Activated B cell treated with CpG ODN at 0.5 μM for 24 hours (primary cell): ENCODE measurements at regions of chr1 and their contacts with region 1.

Region 1: GRCh38 chr1:160098852-160099561 is 588 bp upstream of the IGSF8 start:
- DNase-seq: peak; percentile 98
- ATAC-seq: peak; percentile 90
- H3K4me3 Mint-ChIP-seq: peak overlapping the region; percentile 84
- H3K27ac Mint-ChIP-seq: peak overlapping the region; percentile 85
- H3K4me1 Mint-ChIP-seq: peaks cover 39% of the 10 kb centered on the region
- H3K27me3 Mint-ChIP-seq: no peaks in the 10 kb centered on the region
- CTCF ChIP-seq: no peak

Region 2: DNA sequence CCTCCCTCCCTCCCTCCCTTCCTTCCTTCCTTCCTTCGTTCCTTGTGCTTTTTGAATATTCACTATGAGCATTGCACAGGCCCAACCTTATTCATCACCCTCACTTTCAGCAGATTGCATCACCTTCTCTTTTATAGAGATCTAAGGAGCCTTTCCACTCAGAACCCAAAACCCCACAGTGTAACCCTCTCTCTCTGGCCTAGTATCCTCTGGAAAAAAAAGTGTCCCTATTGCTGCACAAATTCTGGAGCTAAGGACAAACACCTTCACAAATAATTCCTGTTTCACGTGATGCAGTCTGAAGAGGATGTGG is 588.8 kb before region 1 on chr1:
- CTCF ChIA-PET with region 1: no interaction called
- POLR2A ChIA-PET with region 1: no interaction called
- intact Hi-C with region 1: no loop called
- DNase-seq: no peak
- ATAC-seq: no peak
- H3K4me3 Mint-ChIP-seq: no peak overlapping the region
- H3K27ac Mint-ChIP-seq: no peak overlapping the region
- H3K4me1 Mint-ChIP-seq: no peaks in the 10 kb centered on the region
- H3K27me3 Mint-ChIP-seq: peaks cover 5% of the 10 kb centered on the region
- CTCF ChIP-seq: no peak

Region 3: GRCh38 chr1:159924981-159925712 is 173.9 kb before region 1 on chr1 and contains the start of gene TAGLN2:
- CTCF ChIA-PET with region 1: no interaction called
- POLR2A ChIA-PET with region 1: interaction called, 5 read pairs
- intact Hi-C with region 1: loop called (anchors 5 kb)
- DNase-seq: peak; percentile 94
- ATAC-seq: peak; percentile 69
- H3K4me3 Mint-ChIP-seq: peak within 1 kb of the TSS; percentile 99
- H3K27ac Mint-ChIP-seq: peak within 1 kb of the TSS; percentile 99
- H3K4me1 Mint-ChIP-seq: peaks cover 56% of the 10 kb centered on the region
- H3K27me3 Mint-ChIP-seq: no peaks in the 10 kb centered on the region
- CTCF ChIP-seq: no peak
- total RNA-seq, gene TAGLN2: 327 and 364 TPM in 2 replicates

Region 4: DNA sequence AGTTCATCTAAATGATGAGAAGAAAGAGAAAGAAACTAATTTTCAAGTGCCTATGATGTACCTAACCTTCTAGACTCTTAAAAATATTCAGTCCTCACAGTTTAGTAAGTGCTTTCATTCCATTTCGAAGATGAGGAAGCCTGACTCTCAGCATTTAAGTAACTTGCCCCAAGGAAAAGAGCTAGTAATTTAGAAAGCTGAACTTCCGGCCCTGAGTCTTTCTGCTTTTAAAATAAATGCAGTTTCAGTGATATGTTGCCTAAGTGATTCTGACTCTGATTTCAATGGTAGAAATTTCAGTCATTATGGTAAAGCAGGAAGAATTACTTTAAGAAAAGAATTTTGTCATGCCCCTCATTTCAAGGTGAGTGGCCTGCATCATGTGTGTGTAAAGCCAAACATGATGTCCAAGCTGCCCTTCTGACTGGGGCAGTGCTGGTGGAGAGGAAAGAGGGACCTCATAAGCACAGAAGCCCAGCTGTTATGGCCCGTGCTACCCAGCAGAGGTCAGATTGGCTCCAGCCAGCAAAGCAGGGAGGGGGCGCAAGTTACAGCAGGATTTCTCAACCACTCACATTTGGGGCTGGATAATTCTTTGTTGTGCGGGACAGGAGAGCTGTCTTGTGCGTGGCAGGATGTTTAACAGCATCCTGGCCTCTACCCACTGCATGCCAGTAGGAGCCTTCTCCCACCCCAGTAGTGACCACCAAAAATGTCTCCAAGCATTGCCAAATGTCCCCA is 63.1 kb after region 1 on chr1:
- CTCF ChIA-PET with region 1: no interaction called
- POLR2A ChIA-PET with region 1: no interaction called
- intact Hi-C with region 1: no loop called
- DNase-seq: no peak
- ATAC-seq: peak; percentile 25
- H3K4me3 Mint-ChIP-seq: no peak overlapping the region
- H3K27ac Mint-ChIP-seq: no peak overlapping the region
- H3K4me1 Mint-ChIP-seq: peaks cover 2% of the 10 kb centered on the region
- H3K27me3 Mint-ChIP-seq: no peaks in the 10 kb centered on the region
- CTCF ChIP-seq: no peak

Region 5: DNA sequence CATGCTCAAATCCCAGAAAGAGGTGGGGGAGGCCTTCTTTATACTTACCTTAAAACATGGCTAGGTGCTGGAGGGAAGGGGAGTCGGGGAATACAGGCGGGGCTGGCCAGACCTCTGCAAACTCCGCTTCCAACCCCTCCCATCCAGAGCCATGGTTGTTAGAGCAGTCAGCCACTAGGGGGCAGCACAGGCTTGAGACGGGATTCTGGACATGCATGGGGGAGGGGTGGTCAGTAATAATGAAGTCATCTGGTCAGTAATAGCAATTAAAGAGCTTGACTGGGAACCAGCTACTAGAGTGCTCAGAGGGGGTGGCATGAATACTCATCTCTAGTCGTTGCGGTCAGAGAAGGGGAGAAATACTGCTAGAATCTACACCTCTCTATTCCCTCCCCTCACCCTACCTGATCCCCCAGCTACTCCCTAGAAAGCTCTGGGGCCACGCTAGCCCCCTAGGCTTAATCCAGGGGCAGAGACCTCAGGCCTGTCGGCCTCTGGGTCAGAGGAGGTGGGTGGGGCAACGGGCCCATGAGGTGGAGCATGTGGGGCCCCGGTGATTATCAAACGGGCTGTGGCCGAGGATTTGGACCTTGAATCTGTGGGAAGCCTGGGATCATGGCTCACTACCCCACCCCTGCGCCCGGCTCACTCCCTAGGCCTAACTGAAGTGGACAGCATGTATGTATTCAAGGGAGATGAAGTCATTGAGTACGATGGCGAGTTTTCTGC is 94.2 kb after region 1 on chr1:
- CTCF ChIA-PET with region 1: interaction called, 6 read pairs
- POLR2A ChIA-PET with region 1: no interaction called
- intact Hi-C with region 1: loop called (anchors 2 kb)
- DNase-seq: peak; percentile 72
- ATAC-seq: peak; percentile 95
- H3K4me3 Mint-ChIP-seq: no peak overlapping the region
- H3K27ac Mint-ChIP-seq: no peak overlapping the region
- H3K4me1 Mint-ChIP-seq: peaks cover 3% of the 10 kb centered on the region
- H3K27me3 Mint-ChIP-seq: no peaks in the 10 kb centered on the region
- CTCF ChIP-seq: peak; percentile 43

Region 6: GRCh38 chr1:160219062-160219929 is 120.3 kb after region 1 on chr1:
- CTCF ChIA-PET with region 1: interaction called, 26 read pairs
- POLR2A ChIA-PET with region 1: no interaction called
- intact Hi-C with region 1: no loop called
- DNase-seq: no peak
- ATAC-seq: no peak
- H3K4me3 Mint-ChIP-seq: no peak overlapping the region
- H3K27ac Mint-ChIP-seq: peak overlapping the region; percentile 20
- H3K4me1 Mint-ChIP-seq: no peaks in the 10 kb centered on the region
- H3K27me3 Mint-ChIP-seq: no peaks in the 10 kb centered on the region
- CTCF ChIP-seq: no peak

Region 7: GRCh38 chr1:160261893-160262794 is 163.1 kb after region 1 on chr1 and contains the start of gene DCAF8:
- CTCF ChIA-PET with region 1: interaction called, 4 read pairs
- POLR2A ChIA-PET with region 1: interaction called, 7 read pairs
- intact Hi-C with region 1: loop called (anchors 1 kb)
- DNase-seq: peak; percentile 95
- ATAC-seq: peak; percentile 91
- H3K4me3 Mint-ChIP-seq: peak within 1 kb of the TSS; percentile 99
- H3K27ac Mint-ChIP-seq: peak within 1 kb of the TSS; percentile 98
- H3K4me1 Mint-ChIP-seq: peaks cover 47% of the 10 kb centered on the region
- H3K27me3 Mint-ChIP-seq: no peaks in the 10 kb centered on the region
- CTCF ChIP-seq: no peak
- total RNA-seq, gene DCAF8: 155 and 172 TPM in 2 replicates

Region 8: GRCh38 chr1:161399257-161399998 is 1300.4 kb after region 1 on chr1:
- CTCF ChIA-PET with region 1: no interaction called
- POLR2A ChIA-PET with region 1: no interaction called
- intact Hi-C with region 1: loop called (anchors 10 kb)
- DNase-seq: peak; percentile 93
- ATAC-seq: peak; percentile 81
- H3K4me3 Mint-ChIP-seq: peak overlapping the region; percentile 95
- H3K27ac Mint-ChIP-seq: peak overlapping the region; percentile 99
- H3K4me1 Mint-ChIP-seq: peaks cover 30% of the 10 kb centered on the region
- H3K27me3 Mint-ChIP-seq: no peaks in the 10 kb centered on the region
- CTCF ChIP-seq: no peak